Left cardiac atrium (tissue), 4 donors: ENCODE measurements at regions of chr18 and their contacts with region 1.

Region 1: DNA sequence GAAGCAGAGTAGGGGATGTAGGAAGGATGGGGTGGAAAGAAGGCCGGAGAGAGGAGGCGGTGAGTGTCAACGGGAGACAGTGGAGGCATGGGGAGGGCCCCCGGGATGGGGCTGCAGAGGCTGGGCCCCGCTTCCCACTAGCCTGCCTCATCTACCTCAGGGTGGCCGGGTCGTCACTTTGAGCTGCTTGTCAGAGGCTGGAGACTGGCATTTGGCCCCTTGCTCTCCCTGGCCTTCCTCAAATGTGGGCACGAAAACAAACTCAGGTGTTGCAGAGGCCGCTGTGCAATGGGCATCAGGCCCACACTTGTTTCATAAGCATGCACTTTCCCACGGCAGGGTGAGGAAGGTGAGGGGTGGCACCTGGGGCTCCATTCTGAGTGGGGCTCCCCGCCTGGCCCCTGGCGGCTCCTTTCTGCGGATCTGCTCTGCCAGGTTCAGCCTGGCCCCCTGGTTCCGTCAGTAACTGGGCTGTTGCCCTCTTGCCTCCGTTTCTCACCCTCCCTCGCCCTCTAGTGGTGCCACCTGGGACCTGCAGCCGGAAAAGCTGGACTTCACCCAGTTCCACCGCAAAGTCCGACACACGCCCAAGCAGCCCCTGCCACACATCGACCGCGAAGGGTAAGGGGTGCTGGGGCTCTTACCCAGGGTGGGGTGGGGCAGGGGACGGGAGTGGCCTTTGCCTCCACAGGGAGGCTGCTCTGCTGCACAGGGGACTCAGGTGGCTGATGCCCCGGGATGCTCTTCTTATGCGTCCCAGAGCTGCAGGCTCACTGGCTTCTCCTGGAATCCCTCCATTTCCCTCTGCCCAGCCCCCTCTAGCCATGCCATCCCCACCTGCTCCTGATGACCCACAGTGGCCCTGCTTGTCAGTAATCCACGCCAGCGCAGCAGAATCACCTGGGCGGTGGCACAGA is 125.4 kb downstream of the CTIF start:
- DNase-seq: peak; percentile 72
- ATAC-seq: peak; percentile 48 to 50

Region 2: DNA sequence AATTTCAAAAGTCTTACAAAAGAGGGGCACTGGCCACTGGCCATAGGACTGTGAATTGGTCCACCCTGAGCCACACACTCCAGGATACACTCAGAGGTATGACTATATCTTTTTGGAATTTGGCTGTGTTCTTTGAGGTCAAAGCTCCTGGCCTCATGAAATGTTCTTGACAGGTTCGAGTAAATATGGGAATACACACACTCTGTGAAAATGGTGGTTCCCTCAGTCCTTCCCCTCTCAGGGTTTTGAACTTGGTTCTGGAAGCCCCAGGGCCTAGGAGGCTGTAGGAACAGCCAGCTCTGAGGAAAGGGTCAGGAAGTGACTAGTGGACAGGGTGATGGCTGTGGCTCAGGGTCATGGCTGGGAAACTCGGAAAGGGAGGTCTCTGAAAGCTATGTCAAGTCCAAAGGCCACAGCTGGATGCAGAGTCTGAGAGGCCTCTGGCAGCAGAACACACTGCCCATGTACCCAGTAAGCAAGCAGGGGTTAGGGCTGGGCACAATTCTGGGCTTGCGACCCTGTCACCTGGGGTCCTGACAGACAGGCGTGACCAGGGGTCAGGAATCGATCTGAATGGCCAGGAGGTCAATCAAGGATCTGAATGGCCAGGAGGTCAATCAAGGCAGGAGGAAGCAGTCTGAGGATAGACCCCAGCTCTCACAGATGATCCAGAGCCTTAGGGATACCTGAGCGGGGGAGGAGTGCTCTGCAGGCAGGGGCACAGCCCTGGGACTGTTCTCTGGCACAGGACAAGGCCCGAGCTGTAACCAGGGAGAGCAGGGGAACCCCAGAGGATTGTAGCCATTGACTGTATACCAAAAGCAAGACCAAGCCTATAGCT is 510.3 kb before region 1 on chr18:
- intact Hi-C with region 1: no loop called
- DNase-seq: no peak
- ATAC-seq: peak; percentile 62 to 92

Region 3: DNA sequence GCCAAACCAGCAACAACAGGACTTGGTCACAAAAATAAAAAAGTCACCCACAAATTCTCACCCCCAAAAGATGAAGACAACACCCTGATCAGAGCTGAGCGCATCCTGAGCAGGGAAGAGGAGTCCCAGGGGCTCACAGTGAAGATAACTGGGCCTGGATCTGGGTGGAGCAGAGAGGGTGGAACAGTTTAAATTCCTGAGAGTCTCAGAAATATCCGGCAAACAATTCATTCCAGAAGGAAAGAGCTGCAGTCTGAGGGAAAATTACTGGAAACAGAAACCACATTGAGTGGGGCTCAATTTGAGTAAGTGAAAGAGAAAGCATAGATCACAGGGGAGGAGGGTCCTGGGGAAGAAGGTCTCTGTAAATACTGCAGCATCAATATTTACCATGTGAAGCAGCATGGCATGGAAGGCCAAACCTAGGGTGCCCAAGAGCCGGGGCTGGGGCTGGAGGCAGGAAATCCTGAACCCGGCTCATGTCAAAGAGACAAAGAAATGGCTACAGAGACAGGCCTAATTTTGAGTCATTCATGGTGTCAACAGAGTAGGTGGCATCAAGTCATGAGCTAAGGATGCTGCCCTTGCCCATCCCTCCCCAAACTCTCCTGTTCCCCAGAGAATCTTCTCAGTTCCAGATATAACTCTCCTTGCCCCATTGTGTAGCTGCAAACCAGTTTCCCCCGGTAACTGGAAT is 193.6 kb before region 1 on chr18:
- intact Hi-C with region 1: loop called in 1 of 2 experiments (anchors 5 kb)
- DNase-seq: no peak
- ATAC-seq: peak; percentile 47 to 81

Region 4: DNA sequence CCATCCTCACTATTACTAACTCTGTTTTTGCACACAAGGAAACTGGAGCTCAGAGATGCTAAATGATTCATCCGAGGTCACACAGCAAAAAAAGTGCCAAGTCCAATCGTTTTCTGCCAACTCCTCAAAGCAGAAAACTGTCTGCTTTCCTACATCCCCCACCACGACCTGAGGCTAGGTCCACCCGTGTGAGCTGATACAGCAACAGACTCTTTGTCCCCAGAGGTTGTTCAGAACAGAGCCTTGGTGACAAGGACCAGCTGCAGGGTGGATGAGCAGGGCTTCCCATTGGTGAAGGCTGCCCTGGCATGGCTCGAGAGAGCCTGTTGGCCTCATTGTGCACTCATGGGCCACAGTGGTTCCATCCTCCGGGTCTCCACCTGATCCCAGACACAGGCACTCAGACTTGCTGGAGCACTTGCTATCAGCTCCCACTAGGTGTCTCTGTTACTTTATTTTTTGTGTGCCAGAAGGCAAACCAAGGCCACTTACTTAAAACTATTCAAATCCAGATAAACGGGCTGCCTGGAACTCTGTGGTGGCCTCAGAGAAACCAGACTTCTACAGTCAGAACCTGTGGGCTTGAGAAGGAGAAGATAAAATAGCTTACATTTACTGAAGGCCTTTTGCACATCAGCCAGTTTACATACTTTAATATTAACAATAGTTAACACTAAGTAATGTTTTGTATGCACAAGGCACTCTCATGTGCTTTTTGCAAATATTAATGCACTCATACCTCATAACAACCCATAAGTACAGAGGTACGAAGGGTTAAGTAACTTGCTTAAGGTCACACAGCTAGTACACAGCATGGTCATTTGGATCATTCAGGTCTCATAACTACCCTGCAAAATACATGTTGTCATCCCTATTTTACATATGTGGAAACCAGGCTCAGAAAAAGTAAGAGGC is 188.3 kb before region 1 on chr18:
- intact Hi-C with region 1: loop called (anchors 2 to 5 kb)
- DNase-seq: peak; percentile 36
- ATAC-seq: peak; percentile 87 to 94

Region 5: DNA sequence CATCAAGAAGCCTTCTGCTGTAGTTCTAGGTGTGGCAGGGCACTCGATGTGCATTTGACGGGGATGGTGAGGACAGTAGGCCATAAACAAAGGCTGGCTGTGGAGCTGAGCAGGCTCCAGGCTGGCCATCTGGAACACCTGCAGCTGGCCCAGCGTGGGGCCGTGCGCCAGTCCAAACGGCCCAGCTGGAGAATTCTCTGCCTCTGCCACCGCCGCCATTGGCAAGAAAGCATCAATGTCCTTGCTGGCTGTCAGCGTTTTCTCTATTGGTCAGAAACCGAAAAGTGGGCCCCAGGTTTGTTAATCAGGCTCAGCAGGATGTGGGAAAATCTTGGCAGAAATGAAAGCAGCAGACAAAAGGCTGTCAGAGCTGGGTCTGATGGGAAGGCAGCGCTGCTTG is 149.4 kb before region 1 on chr18:
- intact Hi-C with region 1: no loop called
- DNase-seq: no peak
- ATAC-seq: no peak

Region 6: DNA sequence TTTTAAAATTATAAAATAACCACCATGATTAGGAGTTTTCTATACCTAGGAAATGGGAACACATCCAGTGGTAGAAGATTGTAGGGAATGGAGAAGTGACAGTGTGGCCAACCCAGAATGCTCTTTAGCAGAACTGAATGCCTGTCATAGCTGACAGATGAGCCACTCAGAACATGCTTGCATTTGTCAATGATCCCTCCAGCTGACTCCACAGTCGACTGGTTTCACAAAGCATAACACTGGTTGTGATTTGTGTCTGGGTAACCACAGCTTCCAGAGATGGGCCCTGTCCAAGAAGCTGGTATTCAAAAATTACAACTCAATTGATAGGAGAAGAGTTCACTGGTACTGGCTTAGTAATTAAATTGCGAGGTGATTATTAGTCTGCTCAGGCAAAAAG is 134.4 kb before region 1 on chr18:
- intact Hi-C with region 1: loop called in 1 of 2 experiments (anchors 5 kb)
- DNase-seq: no peak
- ATAC-seq: peak; percentile 55 to 78

Region 7: DNA sequence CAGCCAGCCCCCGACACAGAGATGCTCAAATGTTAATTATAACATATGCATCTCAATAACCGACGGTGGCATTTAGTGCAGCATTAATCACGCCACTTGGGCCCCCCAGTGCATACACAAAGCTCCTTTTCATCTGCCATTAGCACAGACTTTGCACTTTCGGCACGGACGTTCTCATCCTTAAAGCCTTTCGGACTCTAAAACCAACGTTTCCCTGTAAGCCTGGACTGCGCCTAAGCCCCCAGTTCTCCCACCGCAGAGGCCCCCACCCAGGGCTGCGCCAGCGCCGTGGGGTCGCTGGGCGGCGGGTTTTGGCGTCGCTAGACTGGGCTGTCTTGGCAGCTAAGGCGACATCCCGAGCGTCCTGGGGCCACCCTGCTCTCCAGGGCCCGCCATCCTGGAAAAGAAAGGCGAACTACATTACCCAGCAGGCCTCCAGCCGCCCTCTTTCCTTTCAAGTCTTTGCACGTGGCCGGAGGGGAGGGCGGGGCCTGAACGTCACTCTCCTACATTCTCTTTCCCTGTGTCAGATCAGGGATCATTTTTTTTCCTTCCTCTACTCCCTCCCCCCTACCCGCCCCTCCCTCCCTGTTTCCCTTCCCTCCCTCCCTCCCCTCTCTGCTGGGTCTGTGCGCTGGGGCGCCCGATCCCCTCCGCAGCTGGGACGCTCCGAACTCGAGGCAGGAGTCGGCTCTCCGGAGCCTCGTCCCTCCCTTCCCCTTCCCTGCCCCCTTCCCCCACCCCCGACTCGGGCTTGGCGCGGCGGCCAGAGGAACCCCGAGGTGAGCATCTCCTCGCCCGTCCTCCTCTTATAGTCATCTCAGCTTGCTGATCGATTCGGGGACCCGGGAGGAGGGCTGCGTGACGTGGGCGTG is 125.4 kb before region 1 on chr18 and contains the start of gene CTIF:
- intact Hi-C with region 1: loop called (anchors 5 to 10 kb)
- DNase-seq: peak; percentile 97
- ATAC-seq: peak; percentile 86 to 90
- total RNA-seq, gene CTIF: 64.9 to 70.6 TPM